B cell (primary cell): ENCODE measurements at regions of chr3 and their contacts with region 1.

Region 1: DNA sequence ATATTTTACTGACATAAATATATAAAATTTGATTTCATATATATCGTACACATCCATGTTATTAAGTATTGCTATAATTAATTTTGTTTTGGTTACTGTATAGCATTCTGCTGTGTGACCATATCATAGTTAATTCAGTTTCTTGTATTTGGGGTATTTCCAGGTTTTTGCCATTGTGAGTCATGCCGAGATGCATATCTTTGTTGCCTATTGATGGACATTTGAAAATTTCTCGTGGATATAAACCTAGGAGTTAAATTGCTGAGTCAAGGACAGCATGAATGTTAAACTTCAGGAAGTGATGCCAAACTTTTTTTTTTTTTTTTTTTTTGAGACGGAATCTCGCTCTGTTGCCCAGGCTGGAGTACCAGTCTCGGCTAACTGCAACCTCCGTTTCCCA is 33.7 kb upstream of the GPR171 start:
- DNase-seq: no peak
- ATAC-seq: no peak
- H3K4me3 ChIP-seq: no peak overlapping the region
- H3K4me3 Mint-ChIP-seq: no peak overlapping the region
- H3K27ac ChIP-seq: no peak overlapping the region
- H3K27ac Mint-ChIP-seq: no peak overlapping the region
- H3K4me1 ChIP-seq: peaks cover 0 to 1% of the 10 kb centered on the region in 2 donors
- H3K4me1 Mint-ChIP-seq: peaks cover 12% of the 10 kb centered on the region
- H3K27me3 ChIP-seq: no peaks in the 10 kb centered on the region
- H3K27me3 Mint-ChIP-seq: no peaks in the 10 kb centered on the region
- CTCF ChIP-seq: no peak

Region 2: GRCh38 chr3:151282921-151283320 is 46.2 kb after region 1 on chr3:
- CTCF ChIA-PET with region 1: interaction called, 460 read pairs
- POLR2A ChIA-PET with region 1: no interaction called
- intact Hi-C with region 1: no loop called
- DNase-seq: peak; percentile 78
- ATAC-seq: peak; percentile 17
- H3K4me3 ChIP-seq: no peak overlapping the region
- H3K4me3 Mint-ChIP-seq: no peak overlapping the region
- H3K27ac ChIP-seq: no peak overlapping the region
- H3K27ac Mint-ChIP-seq: no peak overlapping the region
- H3K4me1 ChIP-seq: peaks cover 30 to 31% of the 10 kb centered on the region in 2 donors
- H3K4me1 Mint-ChIP-seq: peaks cover 28% of the 10 kb centered on the region
- H3K27me3 ChIP-seq: no peaks in the 10 kb centered on the region
- H3K27me3 Mint-ChIP-seq: no peaks in the 10 kb centered on the region
- CTCF ChIP-seq: peak; percentile 84